Activated T-helper 2 cell treated with anti-CD3 and anti-CD28 coated beads, Interferon-gamma antibody, Interleukin-2, Interleukin-4, amounts not matched to agents 10 μg/mL and 5 μg/mL and 100 μg/mL, durations not matched to agents 14 hours and 24 hours and 36 hours (primary cell): ENCODE measurements at regions of chr11 and their contacts with region 1.

Region 1: DNA sequence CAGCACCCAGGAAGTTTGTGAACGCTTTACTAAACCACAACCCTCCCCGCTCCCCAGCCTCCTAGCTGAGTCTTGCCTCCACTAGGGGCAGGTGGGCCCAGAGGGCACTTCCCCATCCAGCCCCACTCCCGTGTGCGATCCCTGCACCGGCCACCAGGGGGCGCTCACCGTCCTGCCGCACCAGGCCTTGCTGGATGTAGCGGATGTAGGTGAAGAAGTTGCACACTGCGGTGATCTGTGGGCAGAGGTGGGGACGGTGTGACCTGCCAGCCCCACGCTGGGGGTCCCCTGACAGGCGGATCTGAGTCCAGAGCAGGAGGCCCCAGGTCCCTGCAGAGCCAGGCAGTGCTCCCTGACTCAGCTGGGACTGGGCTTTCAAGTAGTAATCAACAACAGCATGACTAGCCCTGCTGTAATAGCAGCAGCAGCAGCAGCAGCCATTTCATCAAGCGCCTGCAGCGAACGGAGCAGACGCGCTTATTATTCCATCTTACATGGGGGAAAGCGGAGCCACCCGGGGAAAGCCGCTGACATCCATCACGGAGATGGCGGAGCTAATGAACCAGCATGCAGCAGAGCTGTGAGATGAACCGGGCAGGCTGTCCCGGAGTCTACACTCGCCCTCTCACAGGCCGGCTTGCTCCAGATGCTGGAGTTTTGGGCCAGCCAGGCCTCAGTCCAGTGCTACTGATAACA is 7.9 kb upstream of the FADS3 start:
- DNase-seq: peak; percentile 88
- H3K4me3 Mint-ChIP-seq: no peak overlapping the region
- H3K27ac Mint-ChIP-seq: peak overlapping the region; percentile 6
- H3K4me1 Mint-ChIP-seq: peaks cover 5% of the 10 kb centered on the region
- H3K27me3 Mint-ChIP-seq: peaks cover 2% of the 10 kb centered on the region

Region 2: DNA sequence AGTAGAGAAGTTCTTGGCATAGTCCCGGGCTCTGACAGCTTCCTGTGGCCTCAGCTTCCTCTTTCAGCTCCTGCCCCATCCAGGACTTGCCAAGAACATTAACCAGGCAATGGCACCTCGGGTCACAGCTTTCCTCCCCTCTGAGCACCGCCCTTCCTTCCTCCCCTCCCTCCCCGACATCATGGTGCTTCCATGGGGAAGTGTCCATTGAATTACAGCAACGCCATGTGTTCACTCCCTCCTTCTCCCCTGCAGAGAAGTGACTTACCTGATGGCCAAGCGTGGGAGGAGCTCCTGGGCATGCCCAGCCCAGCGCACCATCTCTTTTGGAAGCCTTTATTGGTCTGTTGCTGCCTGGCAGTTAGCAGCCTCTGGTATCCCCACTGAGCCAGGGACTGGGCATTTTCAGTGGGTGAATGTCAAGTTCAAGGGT is 244.9 kb before region 1 on chr11:
- intact Hi-C with region 1: no loop called
- DNase-seq: no peak
- H3K4me3 Mint-ChIP-seq: no peak overlapping the region
- H3K27ac Mint-ChIP-seq: no peak overlapping the region
- H3K4me1 Mint-ChIP-seq: no peaks in the 10 kb centered on the region
- H3K27me3 Mint-ChIP-seq: peaks cover 5% of the 10 kb centered on the region

Region 3: GRCh38 chr11:61695917-61696316 is 203.4 kb before region 1 on chr11:
- intact Hi-C with region 1: no loop called
- DNase-seq: peak; percentile 85
- H3K4me3 Mint-ChIP-seq: peak overlapping the region; percentile 62
- H3K27ac Mint-ChIP-seq: peak overlapping the region; percentile 81
- H3K4me1 Mint-ChIP-seq: peaks cover 20% of the 10 kb centered on the region
- H3K27me3 Mint-ChIP-seq: no peaks in the 10 kb centered on the region

Region 4: GRCh38 chr11:61871158-61871597 is 28.1 kb before region 1 on chr11:
- intact Hi-C with region 1: loop called (anchors 1 kb)
- DNase-seq: peak; percentile 61
- H3K4me3 Mint-ChIP-seq: peak overlapping the region; percentile 67
- H3K27ac Mint-ChIP-seq: no peak overlapping the region
- H3K4me1 Mint-ChIP-seq: peaks cover 4% of the 10 kb centered on the region
- H3K27me3 Mint-ChIP-seq: no peaks in the 10 kb centered on the region

Region 5: DNA sequence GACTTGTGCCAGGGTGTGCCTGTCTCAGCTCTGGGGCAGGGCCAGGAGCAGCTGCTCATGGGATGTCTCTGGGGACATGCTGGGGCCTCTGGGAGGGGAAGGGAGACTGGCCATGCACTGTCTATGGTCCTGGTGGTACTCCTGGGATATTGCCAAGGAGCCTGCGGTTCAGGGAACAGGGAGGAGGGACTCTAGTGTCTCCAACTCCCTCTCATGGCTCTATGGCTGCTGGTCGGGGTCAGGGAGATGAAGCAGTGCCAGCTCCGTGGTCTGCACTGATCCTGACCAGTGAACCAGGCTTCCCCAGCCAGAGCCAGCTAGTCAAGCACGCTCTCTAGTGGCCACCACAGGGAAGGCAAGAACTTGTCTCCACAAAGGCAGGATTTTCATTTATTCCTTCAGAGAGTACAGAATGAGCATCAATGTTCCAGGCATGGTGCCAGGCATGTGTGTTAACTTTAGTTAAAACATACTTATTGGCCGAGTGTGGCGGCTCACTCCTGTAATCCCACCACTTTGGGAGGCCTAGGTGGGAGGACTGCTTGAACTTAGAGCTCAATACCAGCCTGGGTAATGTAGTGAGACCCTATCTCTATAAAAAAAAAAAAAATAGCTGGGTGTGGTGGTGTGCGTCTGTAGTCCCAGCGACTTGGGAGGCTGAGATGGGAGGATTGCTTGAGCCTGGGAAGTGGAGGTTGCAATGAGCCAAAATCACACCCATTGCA is 48.4 kb after region 1 on chr11:
- intact Hi-C with region 1: loop called (anchors 1 kb)
- DNase-seq: peak; percentile 49
- H3K4me3 Mint-ChIP-seq: no peak overlapping the region
- H3K27ac Mint-ChIP-seq: no peak overlapping the region
- H3K4me1 Mint-ChIP-seq: no peaks in the 10 kb centered on the region
- H3K27me3 Mint-ChIP-seq: peaks cover 4% of the 10 kb centered on the region

Region 6: GRCh38 chr11:62081378-62082291 is 182.3 kb after region 1 on chr11:
- intact Hi-C with region 1: loop called (anchors 1 kb)
- DNase-seq: peak; percentile 65
- H3K4me3 Mint-ChIP-seq: no peak overlapping the region
- H3K27ac Mint-ChIP-seq: no peak overlapping the region
- H3K4me1 Mint-ChIP-seq: peaks cover 6% of the 10 kb centered on the region
- H3K27me3 Mint-ChIP-seq: peaks cover 2% of the 10 kb centered on the region